Common myeloid progenitor, CD34-positive (primary cell): ENCODE measurements at regions of chr14 and their contacts with region 1.

Region 1: GRCh38 chr14:88868558-88869159 is 44.2 kb downstream of the TTC8 start:
- DNase-seq: peak; percentile 41 to 51 (median 46)
- H3K4me3 ChIP-seq: no peak overlapping the region
- H3K27ac ChIP-seq: no peak overlapping the region
- H3K4me1 ChIP-seq: no peaks in the 10 kb centered on the region
- H3K27me3 ChIP-seq: no peaks in the 10 kb centered on the region

Region 2: GRCh38 chr14:88667555-88668273 is 200.9 kb before region 1 on chr14:
- CTCF ChIA-PET with region 1: interaction called, 22 read pairs
- POLR2A ChIA-PET with region 1: no interaction called
- DNase-seq: peak; percentile 76 to 87 (median 82)
- H3K4me3 ChIP-seq: no peak overlapping the region
- H3K27ac ChIP-seq: no peak overlapping the region
- H3K4me1 ChIP-seq: no peaks in the 10 kb centered on the region
- H3K27me3 ChIP-seq: no peaks in the 10 kb centered on the region

Region 3: GRCh38 chr14:88910386-88910785 is 41.7 kb after region 1 on chr14:
- CTCF ChIA-PET with region 1: no interaction called
- POLR2A ChIA-PET with region 1: no interaction called
- DNase-seq: no peak
- H3K4me3 ChIP-seq: no peak overlapping the region
- H3K27ac ChIP-seq: no peak overlapping the region
- H3K4me1 ChIP-seq: no peaks in the 10 kb centered on the region
- H3K27me3 ChIP-seq: peaks cover 0 to 3% (median 0%) of the 10 kb centered on the region in 5 experiments

Region 4: GRCh38 chr14:89198544-89199329 is 330.1 kb after region 1 on chr14:
- CTCF ChIA-PET with region 1: no interaction called
- POLR2A ChIA-PET with region 1: no interaction called
- DNase-seq: no peak
- H3K4me3 ChIP-seq: no peak overlapping the region
- H3K27ac ChIP-seq: no peak overlapping the region
- H3K4me1 ChIP-seq: peaks cover 0 to 25% (median 19%) of the 10 kb centered on the region in 4 experiments
- H3K27me3 ChIP-seq: no peaks in the 10 kb centered on the region